ENCODE measurements at regions of chr6 and their contacts with region 1.

Region 1: DNA sequence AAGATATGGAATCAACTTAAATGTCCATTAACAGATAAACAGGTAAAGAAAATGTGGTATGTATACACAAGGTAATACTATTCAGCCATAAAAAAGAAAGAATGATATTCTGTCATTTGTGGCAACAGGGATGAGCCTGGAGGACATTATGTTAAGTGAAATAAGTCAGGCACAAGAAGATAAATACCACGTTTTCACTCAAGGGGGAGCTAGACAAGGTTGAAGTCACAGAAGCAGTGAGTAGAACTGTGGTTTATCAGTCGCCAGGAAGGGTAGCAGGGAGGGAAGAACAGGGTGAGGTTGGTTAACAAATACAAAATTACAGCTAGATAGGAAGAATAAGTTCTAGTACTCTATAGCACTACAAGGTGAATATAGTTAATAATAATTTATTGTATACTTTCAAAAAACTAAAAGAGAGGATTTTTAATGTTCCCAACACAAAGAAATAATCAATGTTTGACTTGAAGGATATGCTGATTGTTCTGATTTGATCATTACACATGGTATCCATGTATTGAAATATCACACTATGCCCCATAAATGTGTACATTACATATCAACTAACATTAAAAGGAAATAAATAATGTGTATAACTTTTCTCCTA is 21.1 kb downstream of the RTN4IP1 start:
- DNase-seq: no peak
- ATAC-seq: peak; percentile 88
- H3K4me3 Mint-ChIP-seq: no peak overlapping the region
- H3K27ac Mint-ChIP-seq: no peak overlapping the region
- H3K4me1 Mint-ChIP-seq: peaks cover 50% of the 10 kb centered on the region
- H3K27me3 Mint-ChIP-seq: no peaks in the 10 kb centered on the region
- CTCF ChIP-seq: peak; percentile 72

Region 2: GRCh38 chr6:106223300-106223930 is 384.8 kb before region 1 on chr6:
- CTCF ChIA-PET with region 1: no interaction called
- POLR2A ChIA-PET with region 1: no interaction called
- intact Hi-C with region 1: no loop called
- DNase-seq: no peak
- ATAC-seq: peak; percentile 72
- H3K4me3 Mint-ChIP-seq: no peak overlapping the region
- H3K27ac Mint-ChIP-seq: no peak overlapping the region
- H3K4me1 Mint-ChIP-seq: peaks cover 8% of the 10 kb centered on the region
- H3K27me3 Mint-ChIP-seq: no peaks in the 10 kb centered on the region
- CTCF ChIP-seq: peak; percentile 17

Region 3: DNA sequence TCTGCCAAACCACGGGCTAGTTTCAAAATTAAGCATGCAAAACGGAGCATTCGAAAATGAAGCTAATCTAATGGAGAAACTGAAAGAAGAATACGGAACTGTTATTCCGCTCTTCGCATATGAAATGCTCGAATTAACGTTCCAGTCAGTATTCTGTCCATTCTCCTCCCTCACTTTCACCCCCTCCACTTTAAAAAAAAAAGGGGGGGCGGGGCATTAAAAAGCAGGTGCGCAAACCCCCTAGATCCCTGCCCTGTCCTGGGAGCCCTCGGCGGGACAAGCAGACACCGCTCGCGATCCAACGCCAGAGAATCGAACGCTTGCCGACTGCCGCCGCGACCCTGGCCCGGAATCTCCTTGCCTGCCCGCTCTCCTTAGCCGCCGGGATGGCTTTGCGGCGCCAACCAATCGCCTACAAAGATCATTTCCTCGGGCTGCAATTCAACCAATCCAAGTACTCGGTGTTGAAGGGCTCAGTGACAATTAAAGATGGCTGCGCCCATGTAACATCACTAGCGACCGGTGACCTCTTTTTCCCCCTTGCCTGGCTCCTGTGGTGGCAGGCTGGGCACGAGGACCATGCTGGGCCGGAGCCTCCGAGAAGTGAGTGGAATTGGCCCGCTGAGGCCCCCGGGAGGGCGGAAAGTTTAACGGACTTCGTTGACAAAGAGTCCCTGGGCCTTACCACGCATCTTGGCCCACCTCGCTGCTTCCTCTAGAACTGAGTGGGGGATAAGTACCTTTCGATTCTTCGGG is 21.1 kb after region 1 on chr6 and contains the starts of genes QRSL1 and RTN4IP1:
- CTCF ChIA-PET with region 1: interaction called, 10 read pairs
- POLR2A ChIA-PET with region 1: interaction called, 11 read pairs
- intact Hi-C with region 1: loop called (anchors 2 kb)
- DNase-seq: peak; percentile 74
- ATAC-seq: peak; percentile 84
- H3K4me3 Mint-ChIP-seq: peak within 1 kb of the TSS; percentile 93
- H3K27ac Mint-ChIP-seq: peak within 1 kb of the TSS; percentile 96
- H3K4me1 Mint-ChIP-seq: peaks cover 72% of the 10 kb centered on the region
- H3K27me3 Mint-ChIP-seq: no peaks in the 10 kb centered on the region
- CTCF ChIP-seq: no peak
- total RNA-seq, gene QRSL1: 28.4 and 31.1 TPM in 2 replicates
- total RNA-seq, gene RTN4IP1: 9.9 and 11.2 TPM in 2 replicates

Region 4: GRCh38 chr6:106666290-106667021 is 58.3 kb after region 1 on chr6:
- CTCF ChIA-PET with region 1: interaction called, 4 read pairs
- POLR2A ChIA-PET with region 1: no interaction called
- intact Hi-C with region 1: loop called (anchors 5 kb)
- DNase-seq: peak; percentile 49
- ATAC-seq: peak; percentile 99
- H3K4me3 Mint-ChIP-seq: peak overlapping the region; percentile 66
- H3K27ac Mint-ChIP-seq: peak overlapping the region; percentile 87
- H3K4me1 Mint-ChIP-seq: peaks cover 66% of the 10 kb centered on the region
- H3K27me3 Mint-ChIP-seq: no peaks in the 10 kb centered on the region
- CTCF ChIP-seq: no peak

Region 5: GRCh38 chr6:106714281-106714680 is 106.1 kb after region 1 on chr6:
- CTCF ChIA-PET with region 1: no interaction called
- POLR2A ChIA-PET with region 1: no interaction called
- intact Hi-C with region 1: no loop called
- DNase-seq: no peak
- ATAC-seq: no peak
- H3K4me3 Mint-ChIP-seq: no peak overlapping the region
- H3K27ac Mint-ChIP-seq: no peak overlapping the region
- H3K4me1 Mint-ChIP-seq: peaks cover 61% of the 10 kb centered on the region
- H3K27me3 Mint-ChIP-seq: no peaks in the 10 kb centered on the region
- CTCF ChIP-seq: no peak

Region 6: DNA sequence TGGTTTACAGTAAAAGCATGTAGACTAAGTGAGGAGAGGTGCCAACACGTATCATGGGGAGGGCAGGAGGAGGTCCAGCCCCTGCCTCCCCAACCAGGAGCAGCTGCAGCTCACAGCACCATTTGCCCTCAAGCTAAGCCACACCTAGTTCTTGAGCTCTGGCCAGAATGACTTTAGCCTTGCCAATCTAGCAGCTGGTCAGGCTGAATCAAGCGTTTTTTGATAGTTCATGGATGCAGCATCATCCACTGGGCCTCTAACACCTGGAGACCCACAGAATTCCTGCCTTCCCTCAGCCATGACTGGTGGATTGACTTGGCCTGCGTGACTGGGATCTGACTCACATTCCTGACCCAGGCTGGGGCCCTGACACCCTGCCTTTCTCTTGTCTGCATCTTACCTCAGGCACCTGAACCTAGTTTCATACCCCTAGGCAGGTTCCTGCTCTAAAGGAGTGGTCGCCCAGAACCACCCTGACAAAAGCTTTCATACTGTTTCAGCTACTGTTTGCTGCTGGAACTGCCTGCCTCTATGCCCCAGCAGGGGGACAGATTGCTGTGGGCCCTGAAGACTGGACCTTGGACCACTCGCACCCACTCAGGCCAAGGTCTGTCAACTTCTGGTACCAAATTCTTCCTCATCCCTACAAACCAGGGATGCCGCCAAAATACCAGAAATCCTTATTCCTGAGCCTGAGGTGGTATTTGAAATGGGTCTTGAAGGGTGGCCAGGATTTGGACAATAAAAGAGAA is 143.5 kb after region 1 on chr6:
- CTCF ChIA-PET with region 1: no interaction called
- POLR2A ChIA-PET with region 1: interaction called, 11 read pairs
- intact Hi-C with region 1: no loop called
- DNase-seq: no peak
- ATAC-seq: no peak
- H3K4me3 Mint-ChIP-seq: no peak overlapping the region
- H3K27ac Mint-ChIP-seq: no peak overlapping the region
- H3K4me1 Mint-ChIP-seq: peaks cover 13% of the 10 kb centered on the region
- H3K27me3 Mint-ChIP-seq: no peaks in the 10 kb centered on the region
- CTCF ChIP-seq: no peak

Region 7: DNA sequence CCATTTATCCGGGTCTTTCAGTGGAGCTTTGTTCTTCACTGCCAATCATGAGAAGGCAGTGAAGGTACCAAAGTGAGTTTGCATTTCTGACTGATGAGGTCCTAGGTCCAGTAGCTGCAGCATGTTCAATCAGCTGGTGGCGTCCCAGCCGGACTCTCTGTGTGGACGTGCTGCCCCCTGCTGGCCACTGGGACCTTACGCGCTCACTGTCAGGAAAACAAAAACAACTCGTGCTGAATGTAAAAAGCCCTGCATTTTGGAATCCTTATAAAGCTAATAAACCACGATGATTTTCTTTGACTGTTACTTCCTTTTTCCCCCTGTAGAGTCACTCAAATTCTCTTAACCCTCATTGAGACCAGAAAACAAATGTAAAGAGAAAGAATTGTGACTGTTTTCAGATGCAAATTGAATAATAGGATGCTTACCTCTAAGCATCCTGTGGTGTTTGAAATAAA is 371.3 kb after region 1 on chr6:
- CTCF ChIA-PET with region 1: interaction called, 95 read pairs
- POLR2A ChIA-PET with region 1: interaction called, 6 read pairs
- intact Hi-C with region 1: loop called (anchors 1 kb)
- DNase-seq: peak; percentile 79
- ATAC-seq: peak; percentile 32
- H3K4me3 Mint-ChIP-seq: no peak overlapping the region
- H3K27ac Mint-ChIP-seq: no peak overlapping the region
- H3K4me1 Mint-ChIP-seq: peaks cover 19% of the 10 kb centered on the region
- H3K27me3 Mint-ChIP-seq: no peaks in the 10 kb centered on the region
- CTCF ChIP-seq: peak; percentile 28